ENCODE measurements at regions of chr22 and their contacts with region 1.

Region 1: DNA sequence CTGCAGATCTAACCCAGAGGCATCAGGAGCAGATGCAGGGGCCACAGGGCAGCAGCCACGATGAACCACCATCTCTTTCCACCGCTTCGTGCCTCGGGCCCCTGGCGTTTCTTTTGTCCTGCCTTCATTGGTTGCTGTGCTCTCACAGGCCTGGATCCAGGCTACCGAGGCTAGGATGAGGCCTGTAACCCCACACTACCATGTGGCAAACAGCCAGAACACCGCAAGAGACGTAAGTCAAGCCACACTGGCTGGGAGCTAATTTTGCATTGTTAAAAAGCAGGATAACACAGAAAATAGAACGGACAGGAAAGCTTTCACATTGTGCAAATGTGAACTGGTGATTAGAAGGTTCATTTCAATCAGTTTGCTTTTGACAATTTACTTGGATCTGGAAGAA is 15.7 kb upstream of the ARFGAP3 start:
- DNase-seq: no peak
- ATAC-seq: no peak
- H3K4me3 ChIP-seq: no peak overlapping the region
- H3K27ac ChIP-seq: no peak overlapping the region
- H3K4me1 ChIP-seq: peaks cover 0 to 13% (median 6%) of the 10 kb centered on the region in 4 donors
- H3K27me3 ChIP-seq: no peaks in the 10 kb centered on the region
- CTCF ChIP-seq: no peak
- POLR2A ChIP-seq: no peak

Region 2: GRCh38 chr22:42820066-42820763 is 52.6 kb before region 1 on chr22:
- intact Hi-C with region 1: no loop called
- DNase-seq: no peak
- ATAC-seq: peak in 2 of 4 donors; percentile 42 to 68
- H3K4me3 ChIP-seq: no peak overlapping the region
- H3K27ac ChIP-seq: no peak overlapping the region
- H3K4me1 ChIP-seq: peaks cover 0 to 6% (median 0%) of the 10 kb centered on the region in 4 donors
- H3K27me3 ChIP-seq: no peaks in the 10 kb centered on the region
- CTCF ChIP-seq: peak in 1 of 4 donors; percentile 62
- POLR2A ChIP-seq: no peak

Region 3: DNA sequence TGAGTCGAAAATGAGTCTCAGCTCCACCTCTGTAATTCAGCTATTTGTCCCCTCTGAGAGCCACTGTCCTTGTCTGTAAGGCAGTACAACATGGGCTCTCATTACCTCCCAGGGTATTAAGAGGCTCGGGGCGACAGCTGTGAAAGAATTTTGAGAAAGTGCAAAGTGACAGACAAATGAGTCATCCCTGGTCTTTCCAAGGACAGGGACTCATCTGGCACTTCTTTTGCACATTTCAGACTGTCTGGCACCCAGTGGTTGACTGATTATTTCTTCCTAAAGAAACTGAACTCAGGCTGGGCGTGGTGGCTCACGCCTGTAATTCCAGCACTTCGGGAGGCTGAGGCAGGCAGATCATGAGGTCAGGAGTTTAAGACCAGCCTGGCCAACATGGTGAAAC is 46.4 kb after region 1 on chr22:
- intact Hi-C with region 1: no loop called
- DNase-seq: no peak
- ATAC-seq: no peak
- H3K4me3 ChIP-seq: no peak overlapping the region
- H3K27ac ChIP-seq: no peak overlapping the region
- H3K4me1 ChIP-seq: peaks cover 0 to 26% (median 7%) of the 10 kb centered on the region in 4 donors
- H3K27me3 ChIP-seq: no peaks in the 10 kb centered on the region
- CTCF ChIP-seq: no peak
- POLR2A ChIP-seq: no peak

Region 4: DNA sequence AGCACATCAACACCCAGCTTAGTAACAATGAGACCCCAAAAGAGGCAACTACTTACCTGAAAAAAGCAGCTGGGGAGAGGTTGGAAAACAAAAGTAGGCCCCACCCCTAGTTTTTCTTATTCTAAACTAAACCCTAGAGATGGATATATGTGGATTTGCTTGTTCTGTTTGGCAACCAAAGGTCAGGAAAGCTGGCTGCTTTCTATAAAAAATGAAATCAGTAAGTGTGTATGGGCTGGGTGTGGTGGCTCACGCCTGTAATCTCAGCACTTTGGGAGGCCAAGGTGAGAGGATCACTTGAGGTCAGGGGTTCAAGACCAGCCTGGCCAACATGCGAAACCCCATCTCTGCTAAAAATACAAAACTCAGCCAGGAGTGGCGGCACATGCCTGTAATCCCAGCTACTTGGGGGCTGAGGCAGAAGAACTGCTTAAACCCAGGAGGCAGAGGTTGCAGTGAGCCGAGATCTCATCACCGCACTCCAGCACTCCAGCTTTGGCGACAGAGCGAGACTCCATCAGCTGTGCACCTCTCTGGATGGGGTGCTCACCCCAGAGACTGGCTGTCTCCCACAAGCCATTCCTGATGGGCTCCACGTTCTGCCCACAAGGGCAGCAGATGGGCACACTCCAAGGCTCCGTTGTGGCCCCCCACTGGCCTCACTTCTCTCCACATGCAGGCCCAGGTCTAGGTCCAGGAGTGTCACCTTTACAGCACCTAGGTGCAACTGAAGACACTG is 112.2 kb after region 1 on chr22:
- intact Hi-C with region 1: loop called in 1 of 2 experiments (anchors 10 kb)
- DNase-seq: no peak
- ATAC-seq: peak in 1 of 4 donors; percentile 14
- H3K4me3 ChIP-seq: no peak overlapping the region
- H3K27ac ChIP-seq: no peak overlapping the region
- H3K4me1 ChIP-seq: no peaks in the 10 kb centered on the region
- H3K27me3 ChIP-seq: no peaks in the 10 kb centered on the region
- CTCF ChIP-seq: no peak
- POLR2A ChIP-seq: no peak

Region 5: GRCh38 chr22:43015677-43016042 is 142.8 kb after region 1 on chr22:
- intact Hi-C with region 1: no loop called
- DNase-seq: no peak
- ATAC-seq: no peak
- H3K4me3 ChIP-seq: peak overlapping the region; percentile 61 to 64 (median 61)
- H3K27ac ChIP-seq: peak overlapping the region in 2 of 3 donors; percentile 30 to 52
- H3K4me1 ChIP-seq: peaks cover 0 to 26% (median 3%) of the 10 kb centered on the region in 4 donors
- H3K27me3 ChIP-seq: no peaks in the 10 kb centered on the region
- CTCF ChIP-seq: no peak
- POLR2A ChIP-seq: no peak